HEK293T (cell line): ENCODE measurements at regions of chr14 and their contacts with region 1.

Region 1: DNA sequence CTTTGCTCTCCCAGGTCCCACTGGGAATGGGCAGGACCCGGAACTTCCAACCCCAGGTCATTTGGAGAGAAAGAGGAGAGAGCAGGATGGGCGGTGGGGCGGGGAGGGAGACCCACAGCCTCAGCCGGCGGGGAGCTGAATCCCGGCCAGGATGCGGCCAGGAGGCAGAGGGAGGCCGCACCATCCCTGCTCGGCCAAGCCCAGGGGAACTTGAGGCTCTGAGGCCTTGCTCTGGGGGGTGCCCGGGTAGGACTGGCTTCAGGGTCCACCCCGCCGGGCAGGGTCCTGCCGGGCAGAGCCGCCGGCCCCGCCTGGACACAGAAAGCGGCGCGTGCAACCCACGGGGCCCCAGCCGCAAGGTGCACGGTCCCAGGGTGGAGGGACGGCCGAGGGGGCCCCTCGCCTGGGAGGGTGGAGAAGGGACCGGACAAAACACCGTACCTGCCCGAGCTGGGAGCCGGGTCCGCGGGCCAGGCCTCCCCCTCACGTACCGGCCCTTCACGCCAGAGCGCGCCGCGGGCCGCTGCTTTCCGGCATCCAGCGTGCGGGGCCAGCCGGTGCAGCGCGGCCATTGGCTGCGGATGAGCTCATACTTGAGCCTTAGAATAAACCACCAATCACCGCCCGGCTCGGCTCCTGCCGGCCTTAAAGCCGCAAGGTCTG is at the start of gene RPS6KL1:
- DNase-seq: peak; percentile 97

Region 2: GRCh38 chr14:74667758-74668157 is 255.1 kb before region 1 on chr14:
- CTCF ChIA-PET with region 1: no interaction called
- POLR2A ChIA-PET with region 1: no interaction called
- DNase-seq: no peak

Region 3: DNA sequence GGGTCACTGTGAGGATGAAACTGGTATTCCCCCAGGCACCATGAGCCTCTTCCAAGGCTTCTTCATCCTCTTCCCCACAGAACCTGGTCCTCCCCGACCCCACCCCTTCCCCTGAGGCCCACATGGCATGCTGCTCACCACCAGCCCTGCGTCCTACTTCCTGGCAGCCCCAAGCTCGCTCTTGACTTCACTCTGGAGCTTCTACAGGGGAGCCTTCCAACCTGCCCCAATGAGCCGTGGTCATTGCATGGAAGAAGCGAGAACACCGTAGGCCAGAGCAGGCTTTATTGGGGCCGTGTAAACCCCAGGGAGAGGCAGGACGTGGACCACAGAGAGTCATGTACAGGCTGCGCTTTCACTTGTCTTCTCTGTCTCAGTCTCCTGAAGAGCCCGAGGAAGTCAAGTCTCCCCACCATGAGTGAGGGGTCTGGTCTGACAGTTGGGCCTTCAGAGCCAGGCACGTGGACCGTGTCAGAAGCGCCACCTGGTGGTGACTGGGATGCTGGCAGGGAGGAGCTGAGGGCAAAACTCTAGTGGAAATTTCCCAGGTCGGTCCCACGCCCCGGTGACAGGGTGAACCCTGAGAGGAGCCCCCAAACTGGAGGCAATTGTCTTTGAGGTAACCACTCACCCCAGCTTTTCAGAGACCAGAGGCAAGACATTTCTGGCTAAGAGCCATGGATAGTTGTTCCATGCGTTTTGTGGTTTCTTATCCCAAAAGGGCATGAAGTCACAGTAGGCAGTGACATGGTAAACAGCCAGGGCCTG is 17.3 kb before region 1 on chr14:
- CTCF ChIA-PET with region 1: interaction called, 15 read pairs
- POLR2A ChIA-PET with region 1: interaction called, 6 read pairs
- DNase-seq: peak; percentile 75

Region 4: GRCh38 chr14:75063407-75064213 is 140.7 kb after region 1 on chr14 and contains the start of gene ACYP1:
- CTCF ChIA-PET with region 1: no interaction called
- POLR2A ChIA-PET with region 1: interaction called, 16 read pairs
- DNase-seq: peak; percentile 96

Region 5: GRCh38 chr14:75069045-75069810 is 146.4 kb after region 1 on chr14 and contains the start of gene ZC2HC1C:
- CTCF ChIA-PET with region 1: no interaction called
- POLR2A ChIA-PET with region 1: interaction called, 16 read pairs
- DNase-seq: peak; percentile 83